ENCODE measurements at regions of chr19 and their contacts with region 1.

Region 1: GRCh38 chr19:38634757-38635482 is 12.5 kb upstream of the ACTN4 start:
- DNase-seq: no peak
- ATAC-seq: peak; percentile 50
- H3K4me3 ChIP-seq: no peak overlapping the region
- H3K27ac ChIP-seq: no peak overlapping the region; the same call in 1 of the 2 replicates
- H3K4me1 ChIP-seq: peaks cover 15 to 49% of the 10 kb centered on the region in 2 experiments
- H3K27me3 ChIP-seq: no peaks in the 10 kb centered on the region
- CTCF ChIP-seq: peak; percentile 72 to 95 (median 88)
- POLR2A ChIP-seq: no peak
- RAD21 ChIP-seq: peak; percentile 76

Region 2: DNA sequence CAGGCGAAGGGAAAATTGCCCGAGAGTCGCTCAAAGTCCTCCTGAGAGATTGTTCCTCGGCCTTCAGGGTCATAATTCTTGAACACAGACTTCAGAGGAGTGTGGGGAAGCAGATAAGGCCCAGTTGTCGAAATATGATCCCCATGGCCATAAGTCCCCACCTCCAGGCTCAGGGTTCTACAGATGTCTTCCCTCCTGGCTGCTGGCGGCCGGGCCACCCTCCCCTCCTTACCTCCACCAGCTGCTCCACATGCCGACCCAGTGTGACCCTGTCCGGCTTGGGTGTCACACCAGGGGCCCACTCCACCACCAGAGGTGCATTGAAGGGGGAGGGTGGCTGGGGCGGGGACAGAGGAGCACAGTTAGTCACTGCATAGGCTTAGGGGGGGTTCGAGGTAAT is 222.0 kb before region 1 on chr19:
- CTCF ChIA-PET with region 1: no interaction called
- POLR2A ChIA-PET with region 1: no interaction called
- RAD21 ChIA-PET with region 1: no interaction called
- intact Hi-C with region 1: no loop called
- DNase-seq: no peak
- ATAC-seq: no peak
- H3K4me3 ChIP-seq: no peak overlapping the region
- H3K27ac ChIP-seq: no peak overlapping the region
- H3K4me1 ChIP-seq: peaks cover 9 to 22% of the 10 kb centered on the region in 2 experiments; a peak in 3 of 4 replicates
- H3K27me3 ChIP-seq: no peaks in the 10 kb centered on the region
- CTCF ChIP-seq: no peak
- POLR2A ChIP-seq: no peak
- RAD21 ChIP-seq: no peak

Region 3: DNA sequence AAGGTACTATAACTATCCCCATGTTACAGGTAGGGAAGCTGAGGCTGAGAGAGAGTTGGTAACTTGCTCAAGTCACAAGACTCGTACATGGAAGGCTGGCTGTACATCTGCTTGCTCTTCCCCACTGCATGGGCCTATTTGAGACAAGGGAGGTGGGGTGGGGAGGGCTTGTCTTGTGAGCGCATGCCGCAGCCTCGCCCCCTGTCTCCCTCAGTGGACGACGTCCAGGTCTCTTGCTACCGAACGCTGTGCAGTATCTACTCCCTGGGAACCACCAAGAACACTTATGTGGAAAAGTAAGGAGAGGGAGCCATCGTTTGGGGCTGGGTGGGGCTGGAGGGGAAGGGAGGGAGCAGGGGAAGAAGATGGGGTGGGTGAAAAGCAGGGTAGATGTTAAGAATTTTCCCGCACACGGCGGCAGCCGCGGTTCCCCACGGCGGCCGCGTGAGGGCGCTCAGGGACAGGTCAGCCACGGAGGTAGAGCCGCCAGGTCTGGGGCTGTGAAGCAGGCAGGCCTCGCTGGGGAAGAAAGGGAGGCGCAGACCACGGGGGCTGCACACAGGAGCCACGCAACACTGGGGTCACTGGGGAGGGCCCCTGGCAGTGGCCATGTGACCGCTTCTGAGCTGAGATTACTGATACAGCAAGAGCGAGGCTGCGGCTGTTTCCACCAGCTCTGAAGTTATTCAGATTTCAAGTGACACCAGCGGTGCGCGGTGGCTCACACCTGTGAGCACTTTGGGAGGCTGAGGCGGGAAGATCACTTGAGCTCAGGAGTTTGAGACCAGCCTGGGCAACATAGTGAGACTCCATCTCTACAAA is 119.9 kb before region 1 on chr19:
- CTCF ChIA-PET with region 1: interaction called, 4 read pairs
- POLR2A ChIA-PET with region 1: no interaction called
- RAD21 ChIA-PET with region 1: no interaction called
- intact Hi-C with region 1: loop called (anchors 10 kb)
- DNase-seq: peak; percentile 27
- ATAC-seq: peak; percentile 97
- H3K4me3 ChIP-seq: no peak overlapping the region
- H3K27ac ChIP-seq: no peak overlapping the region
- H3K4me1 ChIP-seq: peaks cover 2 to 9% of the 10 kb centered on the region in 2 experiments; a peak in 2 of 4 replicates
- H3K27me3 ChIP-seq: no peaks in the 10 kb centered on the region
- CTCF ChIP-seq: peak; percentile 74 to 91 (median 84)
- POLR2A ChIP-seq: no peak
- RAD21 ChIP-seq: peak; percentile 89

Region 4: GRCh38 chr19:38544034-38544958 is 90.6 kb before region 1 on chr19:
- CTCF ChIA-PET with region 1: interaction called, 16 read pairs
- POLR2A ChIA-PET with region 1: no interaction called
- RAD21 ChIA-PET with region 1: no interaction called
- intact Hi-C with region 1: loop called (anchors 1 kb)
- DNase-seq: peak; percentile 87
- ATAC-seq: peak; percentile 89
- H3K4me3 ChIP-seq: peak overlapping the region; percentile 34 to 49
- H3K27ac ChIP-seq: peak overlapping the region; percentile 66
- H3K4me1 ChIP-seq: peaks cover 10 to 21% of the 10 kb centered on the region in 2 experiments
- H3K27me3 ChIP-seq: no peaks in the 10 kb centered on the region
- CTCF ChIP-seq: peak; percentile 57 to 89 (median 80)
- POLR2A ChIP-seq: peak; percentile 40
- RAD21 ChIP-seq: peak; percentile 91

Region 5: GRCh38 chr19:38583219-38583984 is 51.5 kb before region 1 on chr19:
- CTCF ChIA-PET with region 1: no interaction called
- POLR2A ChIA-PET with region 1: no interaction called
- RAD21 ChIA-PET with region 1: no interaction called
- intact Hi-C with region 1: no loop called
- DNase-seq: no peak
- ATAC-seq: no peak; the same call in 1 of the 2 replicates
- H3K4me3 ChIP-seq: no peak overlapping the region
- H3K27ac ChIP-seq: no peak overlapping the region
- H3K4me1 ChIP-seq: no peaks in the 10 kb centered on the region
- H3K27me3 ChIP-seq: no peaks in the 10 kb centered on the region
- CTCF ChIP-seq: no peak
- POLR2A ChIP-seq: no peak
- RAD21 ChIP-seq: no peak

Region 6: DNA sequence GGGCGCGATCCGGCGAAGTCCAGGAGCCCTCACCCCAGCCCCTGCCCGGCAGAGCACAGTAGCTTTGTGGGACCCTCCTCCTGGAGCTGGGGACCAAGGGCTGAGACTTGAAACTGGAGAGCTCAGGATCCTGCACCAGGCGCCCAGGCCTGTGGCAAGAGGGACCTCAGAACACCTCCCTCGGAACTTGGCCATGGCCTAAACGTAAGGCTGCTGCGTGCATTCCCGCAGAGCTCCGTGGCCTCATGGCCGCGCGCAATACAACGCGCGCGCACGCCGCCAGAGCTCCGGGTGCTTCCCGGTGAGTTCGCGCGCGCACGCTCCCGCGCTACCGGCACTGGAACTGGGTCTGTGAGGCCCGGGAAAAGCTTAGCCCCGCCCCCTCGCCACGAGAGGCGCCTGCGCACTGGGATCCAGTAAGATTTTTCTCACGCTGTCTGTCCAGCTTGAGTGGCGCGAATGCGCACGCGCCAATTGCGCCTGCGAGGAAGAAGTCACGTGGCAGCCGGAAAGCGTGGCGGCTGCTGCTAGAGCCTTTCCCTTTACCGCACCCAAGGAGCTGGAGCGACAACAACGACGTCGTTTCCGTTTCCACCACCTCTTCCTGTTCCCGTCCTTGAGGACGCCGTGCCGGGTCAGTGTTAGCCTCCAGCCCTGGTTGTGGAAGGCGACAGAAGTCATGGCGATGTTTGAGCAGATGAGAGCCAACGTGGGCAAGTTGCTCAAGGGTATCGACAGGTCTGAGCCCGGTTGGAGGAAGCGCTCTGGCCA is 16.1 kb before region 1 on chr19 and contains the start of gene EIF3K:
- CTCF ChIA-PET with region 1: interaction called, 21 read pairs
- POLR2A ChIA-PET with region 1: interaction called, 4 read pairs
- RAD21 ChIA-PET with region 1: no interaction called
- intact Hi-C with region 1: no loop called
- DNase-seq: peak; percentile 97
- ATAC-seq: peak; percentile 91
- H3K4me3 ChIP-seq: peak within 1 kb of the TSS; percentile 98 to 99
- H3K27ac ChIP-seq: peak within 1 kb of the TSS; percentile 76
- H3K4me1 ChIP-seq: peaks cover 7 to 24% of the 10 kb centered on the region in 2 experiments
- H3K27me3 ChIP-seq: no peaks in the 10 kb centered on the region
- CTCF ChIP-seq: no peak
- POLR2A ChIP-seq: peak; percentile 71
- RAD21 ChIP-seq: no peak
- total RNA-seq, gene EIF3K: 313 TPM

Region 7: DNA sequence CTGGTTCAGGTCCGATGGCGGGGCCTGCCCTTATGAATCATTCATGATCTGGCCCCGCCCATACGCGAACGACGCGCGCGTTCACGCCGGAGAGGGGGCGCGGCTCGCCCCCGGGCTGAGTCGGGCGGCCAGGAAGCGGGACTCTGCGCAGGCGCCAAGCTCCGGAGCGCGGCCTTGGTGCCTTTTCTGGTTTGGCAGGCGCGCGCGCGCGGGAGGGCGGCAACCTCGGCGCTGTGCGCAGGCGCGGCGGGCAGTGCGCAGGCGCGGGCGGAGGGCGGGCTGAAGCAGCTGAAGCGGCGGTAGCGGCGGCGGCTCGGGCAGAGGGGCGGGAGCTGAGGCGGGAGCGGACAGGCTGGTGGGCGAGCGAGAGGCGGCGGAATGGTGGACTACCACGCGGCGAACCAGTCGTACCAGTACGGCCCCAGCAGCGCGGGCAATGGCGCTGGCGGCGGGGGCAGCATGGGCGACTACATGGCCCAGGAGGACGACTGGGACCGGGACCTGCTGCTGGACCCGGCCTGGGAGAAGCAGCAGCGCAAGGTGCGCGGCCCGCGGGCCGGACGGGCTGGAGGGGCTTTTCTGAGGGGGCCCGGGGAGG is 12.5 kb after region 1 on chr19 and contains the start of gene ACTN4:
- CTCF ChIA-PET with region 1: interaction called, 16 read pairs
- POLR2A ChIA-PET with region 1: interaction called, 8 read pairs
- RAD21 ChIA-PET with region 1: no interaction called
- intact Hi-C with region 1: no loop called
- DNase-seq: peak; percentile 92
- ATAC-seq: peak; percentile 80
- H3K4me3 ChIP-seq: peak within 1 kb of the TSS; percentile 84 to 100
- H3K27ac ChIP-seq: peak within 1 kb of the TSS; percentile 72
- H3K4me1 ChIP-seq: peaks cover 39 to 53% of the 10 kb centered on the region in 2 experiments
- H3K27me3 ChIP-seq: no peaks in the 10 kb centered on the region
- CTCF ChIP-seq: no peak
- POLR2A ChIP-seq: peak; percentile 60
- RAD21 ChIP-seq: no peak
- total RNA-seq, gene ACTN4: 651 TPM

Region 8: GRCh38 chr19:38683393-38684080 is 48.6 kb after region 1 on chr19:
- CTCF ChIA-PET with region 1: interaction called, 10 read pairs
- POLR2A ChIA-PET with region 1: no interaction called
- RAD21 ChIA-PET with region 1: no interaction called
- intact Hi-C with region 1: no loop called
- DNase-seq: peak; percentile 99
- ATAC-seq: peak; percentile 74
- H3K4me3 ChIP-seq: peak overlapping the region; percentile 36 to 53
- H3K27ac ChIP-seq: peak overlapping the region; percentile 98
- H3K4me1 ChIP-seq: peaks cover 82 to 99% of the 10 kb centered on the region in 2 experiments
- H3K27me3 ChIP-seq: no peaks in the 10 kb centered on the region
- CTCF ChIP-seq: no peak
- POLR2A ChIP-seq: no peak
- RAD21 ChIP-seq: no peak; the same call in none of the 2 replicates

Region 9: DNA sequence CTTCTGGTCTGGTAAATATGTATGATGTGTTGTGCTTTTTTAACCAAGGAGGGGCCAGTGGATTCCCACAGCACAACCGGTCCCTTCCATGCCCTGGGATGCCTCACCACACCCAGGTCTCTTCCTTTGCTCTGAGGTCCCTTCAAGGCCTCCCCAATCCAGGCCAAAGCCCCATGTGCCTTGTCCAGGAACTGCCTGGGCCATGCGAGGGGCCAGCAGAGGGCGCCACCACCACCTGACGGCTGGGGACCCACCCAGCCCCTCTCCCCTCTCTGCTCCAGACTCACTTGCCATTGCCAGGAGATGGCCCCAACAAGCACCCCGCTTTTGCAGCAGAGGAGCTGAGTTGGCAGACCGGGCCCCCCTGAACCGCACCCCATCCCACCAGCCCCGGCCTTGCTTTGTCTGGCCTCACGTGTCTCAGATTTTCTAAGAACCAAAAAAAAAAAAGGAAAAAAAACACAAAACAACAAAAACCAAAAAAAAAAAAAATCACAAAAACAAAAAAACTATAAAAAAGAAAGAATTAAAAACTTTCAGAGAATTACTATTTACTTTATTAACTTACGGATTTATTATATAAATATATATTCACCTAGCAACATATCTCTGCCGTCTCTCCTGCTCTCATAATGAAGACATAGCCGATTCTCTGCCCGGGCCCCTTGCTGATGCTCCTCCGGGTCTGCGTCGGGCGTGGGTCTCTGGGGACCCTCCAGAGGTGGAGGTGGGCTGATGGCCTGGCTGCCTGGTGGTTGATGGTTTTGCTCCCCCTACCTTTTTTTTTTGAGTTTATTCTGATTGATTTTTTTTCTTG is 94.9 kb after region 1 on chr19:
- CTCF ChIA-PET with region 1: no interaction called
- POLR2A ChIA-PET with region 1: no interaction called
- RAD21 ChIA-PET with region 1: no interaction called
- intact Hi-C with region 1: no loop called
- DNase-seq: peak; percentile 24
- ATAC-seq: peak; percentile 74
- H3K4me3 ChIP-seq: no peak overlapping the region
- H3K27ac ChIP-seq: no peak overlapping the region
- H3K4me1 ChIP-seq: peaks cover 11 to 41% of the 10 kb centered on the region in 2 experiments; a peak in 3 of 4 replicates
- H3K27me3 ChIP-seq: no peaks in the 10 kb centered on the region
- CTCF ChIP-seq: peak; percentile 67 to 92 (median 87); a peak in 5 of 6 replicates
- POLR2A ChIP-seq: no peak
- RAD21 ChIP-seq: peak; percentile 62

Region 10: DNA sequence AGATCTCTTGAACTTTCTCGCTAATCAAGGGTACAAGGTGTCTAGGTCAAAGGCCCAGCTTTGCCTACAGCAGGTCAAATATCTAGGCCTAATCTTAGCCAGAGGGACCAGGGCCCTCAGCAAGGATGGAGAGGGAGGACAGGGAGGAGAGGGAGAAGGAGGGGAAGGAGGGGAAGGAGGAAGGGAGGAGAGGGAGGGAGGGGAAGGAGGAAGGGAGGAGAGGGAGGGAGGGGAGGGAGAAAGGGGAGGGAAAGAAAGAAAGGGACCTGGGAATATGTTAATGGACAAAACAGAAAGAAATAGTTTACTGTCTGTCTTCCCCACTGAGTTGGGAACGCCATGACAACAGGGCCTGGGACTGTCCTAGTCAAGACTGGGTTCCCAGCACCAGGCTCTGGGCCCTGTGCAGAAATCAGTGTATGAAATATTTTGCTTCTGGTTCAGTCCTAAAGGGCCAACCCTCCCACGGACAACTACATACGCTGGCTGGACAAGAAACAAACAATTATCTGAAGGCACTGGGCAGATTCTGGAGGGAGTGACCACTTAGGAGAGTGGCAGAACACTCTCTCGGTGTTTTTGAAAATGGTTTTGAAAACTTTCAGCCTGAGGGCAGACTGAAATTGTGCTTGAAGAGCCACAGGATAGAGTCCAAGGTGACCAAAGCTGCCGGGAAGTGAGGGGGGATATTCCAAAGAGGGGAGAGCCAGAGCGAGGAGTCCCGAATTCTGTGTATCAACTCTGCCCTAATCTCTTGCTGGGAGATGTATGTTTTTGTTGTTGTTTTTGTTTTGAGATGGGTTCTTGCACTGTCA is 192.2 kb after region 1 on chr19:
- CTCF ChIA-PET with region 1: no interaction called
- POLR2A ChIA-PET with region 1: no interaction called
- RAD21 ChIA-PET with region 1: no interaction called
- intact Hi-C with region 1: no loop called
- DNase-seq: no peak
- ATAC-seq: no peak
- H3K4me3 ChIP-seq: no peak overlapping the region
- H3K27ac ChIP-seq: no peak overlapping the region
- H3K4me1 ChIP-seq: peaks cover under 1 to 18% of the 10 kb centered on the region in 2 experiments; a peak in 3 of 4 replicates
- H3K27me3 ChIP-seq: no peaks in the 10 kb centered on the region
- CTCF ChIP-seq: no peak
- POLR2A ChIP-seq: no peak
- RAD21 ChIP-seq: no peak

Measured in HCT116 (cell line).